ENCODE measurements at regions of chr2 and their contacts with region 1.

Region 1: GRCh38 chr2:26968001-26968400 is 2.4 kb upstream of the MAPRE3 start:
- DNase-seq: no peak
- ATAC-seq: no peak
- H3K4me3 ChIP-seq: no peak overlapping the region
- H3K27ac ChIP-seq: no peak overlapping the region
- H3K4me1 ChIP-seq: peaks cover 0 to 13% (median 5%) of the 10 kb centered on the region in 3 donors
- H3K27me3 ChIP-seq: no peaks in the 10 kb centered on the region
- CTCF ChIP-seq: no peak

Region 2: GRCh38 chr2:26870585-26871095 is 97.4 kb before region 1 on chr2:
- intact Hi-C with region 1: no loop called
- DNase-seq: no peak
- ATAC-seq: no peak
- H3K4me3 ChIP-seq: no peak overlapping the region
- H3K27ac ChIP-seq: no peak overlapping the region
- H3K4me1 ChIP-seq: no peaks in the 10 kb centered on the region
- H3K27me3 ChIP-seq: no peaks in the 10 kb centered on the region
- CTCF ChIP-seq: no peak

Region 3: GRCh38 chr2:27016801-27017325 is 48.9 kb after region 1 on chr2:
- intact Hi-C with region 1: loop called in 1 of 3 experiments (anchors 5 kb)
- DNase-seq: peak in 1 of 6 donors; percentile 53
- ATAC-seq: peak; percentile 55 to 80 (median 75)
- H3K4me3 ChIP-seq: no peak overlapping the region
- H3K27ac ChIP-seq: no peak overlapping the region
- H3K4me1 ChIP-seq: no peaks in the 10 kb centered on the region
- H3K27me3 ChIP-seq: no peaks in the 10 kb centered on the region
- CTCF ChIP-seq: peak; percentile 34 to 55 (median 46)

Region 4: GRCh38 chr2:27024812-27025211 is 56.8 kb after region 1 on chr2:
- intact Hi-C with region 1: loop called in 1 of 3 experiments (anchors 5 kb)
- DNase-seq: peak in 1 of 6 donors; percentile 48
- ATAC-seq: no peak
- H3K4me3 ChIP-seq: no peak overlapping the region
- H3K27ac ChIP-seq: no peak overlapping the region
- H3K4me1 ChIP-seq: no peaks in the 10 kb centered on the region
- H3K27me3 ChIP-seq: no peaks in the 10 kb centered on the region
- CTCF ChIP-seq: no peak

Region 5: GRCh38 chr2:27086090-27086723 is 118.2 kb after region 1 on chr2:
- intact Hi-C with region 1: loop called in 1 of 3 experiments (anchors 10 kb)
- DNase-seq: peak; percentile 93 to 100 (median 98)
- ATAC-seq: peak; percentile 87 to 95 (median 93)
- H3K4me3 ChIP-seq: peak overlapping the region; percentile 50 to 73 (median 56)
- H3K27ac ChIP-seq: peak overlapping the region; percentile 66 to 83 (median 77)
- H3K4me1 ChIP-seq: peaks cover 0 to 17% (median 0%) of the 10 kb centered on the region in 3 donors
- H3K27me3 ChIP-seq: no peaks in the 10 kb centered on the region
- CTCF ChIP-seq: peak; percentile 81 to 97 (median 96)